ENCODE measurements at regions of chr1 and their contacts with region 1.

Region 1: GRCh38 chr1:113042285-113043143 is 30.5 kb upstream of the LRIG2 start:
- DNase-seq: peak; percentile 64 to 87 (median 87)
- ATAC-seq: peak; percentile 90 to 91
- H3K4me3 ChIP-seq: no peak overlapping the region
- H3K27ac ChIP-seq: no peak overlapping the region
- H3K4me1 ChIP-seq: peaks cover 3% of the 10 kb centered on the region
- H3K27me3 ChIP-seq: no peaks in the 10 kb centered on the region

Region 2: DNA sequence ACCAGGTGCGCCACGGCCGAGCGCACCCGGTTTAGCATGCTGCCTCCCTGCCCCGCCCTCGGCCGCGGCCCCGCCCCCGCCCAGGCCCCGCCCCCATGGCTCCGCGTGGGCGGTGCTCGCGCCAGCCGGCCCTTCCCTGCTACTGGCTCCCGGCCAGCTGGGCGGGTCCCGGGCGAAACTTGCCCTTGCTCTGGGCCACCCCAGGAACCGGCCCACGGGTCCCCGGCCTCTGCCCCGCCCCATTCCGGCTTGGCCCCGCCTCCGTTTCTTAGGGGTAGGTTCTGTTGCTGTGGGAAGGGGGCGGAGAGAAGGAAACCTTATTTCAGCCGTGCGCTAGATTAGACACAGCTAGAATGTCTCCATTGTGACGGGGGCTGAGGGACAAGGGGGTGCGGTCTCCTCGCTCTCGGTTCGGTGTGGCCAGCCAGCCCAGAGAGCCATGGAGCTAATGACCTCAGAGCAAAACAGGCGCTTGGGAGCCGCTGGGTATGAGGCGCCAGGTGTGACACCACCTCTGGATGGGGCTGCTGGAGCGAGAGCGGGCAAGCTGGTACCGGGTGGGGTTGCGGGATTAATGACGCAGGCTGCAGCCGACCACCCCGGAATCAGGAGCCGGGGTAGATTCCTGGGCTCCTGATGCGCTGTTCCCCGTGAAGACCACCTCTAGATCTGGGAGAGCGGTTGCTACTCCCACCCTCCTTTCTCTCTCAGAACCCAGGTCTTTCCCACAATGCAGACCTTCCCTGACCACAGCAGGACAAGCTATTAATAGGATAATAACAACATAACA is 327.1 kb before region 1 on chr1 and contains the start of gene PPM1J:
- intact Hi-C with region 1: loop called in 3 of 4 experiments (anchors 10 kb)
- DNase-seq: peak; percentile 99 to 100 (median 100)
- ATAC-seq: peak; percentile 92
- H3K4me3 ChIP-seq: peak within 1 kb of the TSS; percentile 69
- H3K27ac ChIP-seq: peak within 1 kb of the TSS; percentile 32
- H3K4me1 ChIP-seq: no peaks in the 10 kb centered on the region
- H3K27me3 ChIP-seq: no peaks in the 10 kb centered on the region
- total RNA-seq, gene PPM1J: 5.5 to 9.0 (median 6.3) TPM

Region 3: GRCh38 chr1:112722601-112723510 is 319.7 kb before region 1 on chr1:
- intact Hi-C with region 1: loop called in 3 of 4 experiments (anchors 10 kb)
- DNase-seq: no peak
- ATAC-seq: peak; percentile 49 to 50
- H3K4me3 ChIP-seq: no peak overlapping the region
- H3K27ac ChIP-seq: no peak overlapping the region
- H3K4me1 ChIP-seq: no peaks in the 10 kb centered on the region
- H3K27me3 ChIP-seq: no peaks in the 10 kb centered on the region

Region 4: GRCh38 chr1:112803906-112804762 is 238.4 kb before region 1 on chr1:
- intact Hi-C with region 1: loop called in 2 of 4 experiments (anchors 5 to 10 kb)
- DNase-seq: peak; percentile 55 to 86 (median 83)
- ATAC-seq: peak; percentile 86 to 87
- H3K4me3 ChIP-seq: no peak overlapping the region
- H3K27ac ChIP-seq: no peak overlapping the region
- H3K4me1 ChIP-seq: no peaks in the 10 kb centered on the region
- H3K27me3 ChIP-seq: no peaks in the 10 kb centered on the region

Region 5: GRCh38 chr1:112809253-112809684 is 233.2 kb before region 1 on chr1:
- intact Hi-C with region 1: loop called in 2 of 4 experiments (anchors 5 to 10 kb)
- DNase-seq: peak; percentile 67 to 90 (median 89)
- ATAC-seq: peak; percentile 78 to 89
- H3K4me3 ChIP-seq: no peak overlapping the region
- H3K27ac ChIP-seq: no peak overlapping the region
- H3K4me1 ChIP-seq: no peaks in the 10 kb centered on the region
- H3K27me3 ChIP-seq: no peaks in the 10 kb centered on the region

Region 6: DNA sequence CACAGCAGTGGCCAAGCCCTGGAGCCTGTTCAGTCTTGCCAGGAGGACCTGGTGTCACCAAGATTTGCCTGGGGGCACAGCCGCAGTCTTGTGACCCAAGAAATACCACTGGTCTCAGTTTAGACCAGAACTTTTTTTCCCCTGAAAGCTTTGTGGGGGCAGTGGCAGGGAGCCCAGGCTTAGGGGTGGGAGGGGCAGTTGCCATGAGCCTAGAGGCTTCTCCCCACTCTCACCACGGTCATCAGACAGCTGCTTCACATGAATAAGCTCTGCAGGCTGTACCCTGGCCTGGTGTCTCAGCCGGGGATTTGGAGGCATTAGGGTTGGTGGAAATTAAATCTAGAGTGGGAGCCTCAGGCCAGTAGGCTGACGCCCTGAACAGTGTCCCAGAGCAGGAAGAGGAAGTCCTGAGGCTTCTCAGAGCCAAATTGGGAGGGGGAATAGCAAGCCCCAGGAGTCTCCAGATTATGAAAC is 160.2 kb before region 1 on chr1:
- intact Hi-C with region 1: loop called (anchors 1 to 5 kb)
- DNase-seq: peak in 1 of 3 donors; percentile 58
- ATAC-seq: peak; percentile 61 to 65
- H3K4me3 ChIP-seq: no peak overlapping the region
- H3K27ac ChIP-seq: peak overlapping the region; percentile 61
- H3K4me1 ChIP-seq: no peaks in the 10 kb centered on the region
- H3K27me3 ChIP-seq: no peaks in the 10 kb centered on the region

Region 7: GRCh38 chr1:113021430-113022086 is 21.0 kb before region 1 on chr1:
- intact Hi-C with region 1: no loop called
- DNase-seq: no peak
- ATAC-seq: no peak
- H3K4me3 ChIP-seq: no peak overlapping the region
- H3K27ac ChIP-seq: no peak overlapping the region
- H3K4me1 ChIP-seq: no peaks in the 10 kb centered on the region
- H3K27me3 ChIP-seq: no peaks in the 10 kb centered on the region

Measured in right cardiac atrium (tissue), 5 donors.